ENCODE measurements at regions of chr12 and their contacts with region 1.

Region 1: GRCh38 chr12:118436002-118436730 is 59.8 kb downstream of the SUDS3 start:
- DNase-seq: no peak
- H3K4me3 ChIP-seq: no peak overlapping the region
- H3K27ac ChIP-seq: no peak overlapping the region
- H3K4me1 ChIP-seq: no peaks in the 10 kb centered on the region
- H3K27me3 ChIP-seq: no peaks in the 10 kb centered on the region
- CTCF ChIP-seq: no peak

Region 2: DNA sequence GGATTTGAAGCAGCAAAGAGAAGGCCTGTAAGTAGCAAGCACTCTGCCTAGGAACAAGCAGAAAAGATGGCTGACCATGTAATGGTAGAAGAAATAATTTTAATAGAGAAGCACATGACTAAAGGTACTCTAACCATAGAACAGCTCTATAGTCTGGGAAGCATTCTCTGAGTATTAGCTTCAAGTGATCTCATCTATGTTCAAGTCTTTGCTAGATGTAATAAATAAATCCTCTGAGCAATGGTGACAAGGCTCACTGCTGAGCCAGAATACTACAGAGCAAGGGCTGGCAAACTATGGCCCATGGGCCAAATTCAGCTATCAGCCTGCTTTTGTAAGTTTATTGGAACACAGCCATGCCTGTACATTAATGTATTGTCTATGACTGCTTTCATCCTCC is 215.5 kb before region 1 on chr12:
- intact Hi-C with region 1: no loop called
- DNase-seq: no peak
- H3K4me3 ChIP-seq: no peak overlapping the region
- H3K27ac ChIP-seq: no peak overlapping the region
- H3K4me1 ChIP-seq: no peaks in the 10 kb centered on the region
- H3K27me3 ChIP-seq: no peaks in the 10 kb centered on the region
- CTCF ChIP-seq: no peak

Region 3: GRCh38 chr12:118633071-118633470 is 196.9 kb after region 1 on chr12:
- intact Hi-C with region 1: loop called (anchors 10 kb)
- DNase-seq: no peak
- H3K4me3 ChIP-seq: no peak overlapping the region
- H3K27ac ChIP-seq: no peak overlapping the region
- H3K4me1 ChIP-seq: no peaks in the 10 kb centered on the region
- H3K27me3 ChIP-seq: no peaks in the 10 kb centered on the region
- CTCF ChIP-seq: no peak

Measured in colonic mucosa (tissue), 4 donors.